ENCODE measurements at regions of chr20 and their contacts with region 1.

Region 1: DNA sequence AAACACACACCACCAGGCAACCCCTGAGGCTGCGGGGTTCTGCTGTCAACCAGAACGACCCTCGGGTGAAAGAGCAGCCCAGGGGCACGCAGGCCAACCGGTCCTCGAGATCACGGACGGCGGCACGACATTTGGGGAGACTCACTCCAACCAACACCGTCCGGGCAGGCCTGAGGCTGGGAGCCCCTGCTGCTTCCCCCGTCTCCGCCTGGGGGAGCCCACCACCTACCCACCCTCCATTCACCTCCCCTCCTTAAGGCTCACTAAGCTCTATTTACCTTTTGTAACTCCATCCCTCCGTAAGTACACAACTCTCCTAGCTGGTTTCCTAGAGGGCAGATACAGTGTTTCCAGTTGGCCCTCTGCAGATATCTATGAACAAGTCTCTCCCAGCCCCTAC is 971.3 kb upstream of the DEFB115 start:
- DNase-seq: no peak
- ATAC-seq: no peak
- H3K4me3 ChIP-seq: no peak overlapping the region
- H3K4me3 Mint-ChIP-seq: peak overlapping the region in 2 of 10 donors; percentile 17 to 58
- H3K27ac ChIP-seq: no peak overlapping the region
- H3K27ac Mint-ChIP-seq: peak overlapping the region in 4 of 9 donors; percentile 4 to 82 (median 35)
- H3K4me1 ChIP-seq: peaks cover 4 to 5% of the 10 kb centered on the region in 2 donors
- H3K4me1 Mint-ChIP-seq: peaks cover 0 to 58% (median 24%) of the 10 kb centered on the region in 7 donors
- H3K27me3 ChIP-seq: no peaks in the 10 kb centered on the region
- H3K27me3 Mint-ChIP-seq: no peaks in the 10 kb centered on the region

Region 2: GRCh38 chr20:29306390-29307072 is 979.6 kb before region 1 on chr20:
- CTCF ChIA-PET with region 1: no interaction called
- POLR2A ChIA-PET with region 1: no interaction called
- intact Hi-C with region 1: loop called in 1 of 2 experiments (anchors 10 kb)
- DNase-seq: peak in 1 of 9 donors; percentile 48
- ATAC-seq: no peak
- H3K4me3 ChIP-seq: no peak overlapping the region
- H3K4me3 Mint-ChIP-seq: peak overlapping the region in 4 of 10 donors; percentile 46 to 82 (median 60)
- H3K27ac ChIP-seq: no peak overlapping the region
- H3K27ac Mint-ChIP-seq: peak overlapping the region in 3 of 9 donors; percentile 20 to 94 (median 78)
- H3K4me1 ChIP-seq: no peaks in the 10 kb centered on the region
- H3K4me1 Mint-ChIP-seq: peaks cover 0 to 36% (median 20%) of the 10 kb centered on the region in 7 donors
- H3K27me3 ChIP-seq: no peaks in the 10 kb centered on the region
- H3K27me3 Mint-ChIP-seq: peaks cover 0 to 38% (median 4%) of the 10 kb centered on the region in 5 donors

Region 3: DNA sequence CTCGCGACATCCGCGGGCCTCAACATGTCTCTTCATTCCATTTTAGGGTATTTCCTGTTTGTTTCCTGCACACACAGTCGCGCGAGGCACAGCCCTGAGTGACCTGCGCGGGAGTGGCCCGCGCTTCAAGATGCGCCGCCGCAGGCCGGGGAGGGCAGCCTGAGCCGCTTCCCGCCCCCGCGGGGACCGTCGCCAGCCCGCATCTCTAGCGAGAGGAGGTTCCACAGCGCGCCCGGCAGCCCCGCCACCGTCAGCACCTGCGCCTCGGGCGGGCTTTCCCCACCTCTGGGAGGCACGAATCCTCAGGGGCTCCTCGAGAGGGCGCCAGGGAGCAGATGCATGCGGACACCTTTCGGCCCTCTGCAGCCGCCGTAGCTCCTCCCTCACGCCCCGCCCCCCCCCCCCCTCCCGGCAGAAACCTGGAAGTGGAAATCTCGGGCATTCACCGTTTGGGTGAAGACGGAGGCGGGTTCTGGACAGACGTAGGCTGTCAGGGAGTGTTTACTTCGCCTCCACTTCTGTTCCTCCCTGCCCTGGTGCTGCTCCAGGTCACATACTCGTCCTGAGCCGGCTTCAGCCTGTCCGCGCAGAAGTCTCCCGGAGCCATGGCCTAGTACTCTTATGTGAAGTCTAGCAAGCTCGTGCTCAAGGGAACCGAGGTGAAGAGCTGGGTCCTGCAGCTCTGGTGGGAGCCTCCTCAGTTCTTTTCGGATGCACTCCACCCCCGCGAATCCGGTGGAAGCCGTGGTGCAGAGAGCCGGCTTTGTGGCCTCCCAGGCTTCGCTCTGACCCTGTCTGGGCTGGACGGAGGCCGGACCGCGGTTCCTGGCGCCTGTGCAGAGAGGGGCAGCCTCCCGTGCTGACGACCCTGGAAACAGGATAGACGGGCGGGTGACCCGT is 90.9 kb after region 1 on chr20:
- CTCF ChIA-PET with region 1: no interaction called
- POLR2A ChIA-PET with region 1: no interaction called
- intact Hi-C with region 1: loop called (anchors 1 to 2 kb)
- DNase-seq: peak; percentile 45 to 93 (median 89)
- ATAC-seq: peak; percentile 98
- H3K4me3 ChIP-seq: peak overlapping the region; percentile 89
- H3K4me3 Mint-ChIP-seq: peak overlapping the region in 9 of 10 donors; percentile 62 to 97 (median 91)
- H3K27ac ChIP-seq: peak overlapping the region; percentile 87
- H3K27ac Mint-ChIP-seq: peak overlapping the region; percentile 68 to 97 (median 94)
- H3K4me1 ChIP-seq: peaks cover 0 to 2% of the 10 kb centered on the region in 2 donors
- H3K4me1 Mint-ChIP-seq: peaks cover 0 to 40% (median 21%) of the 10 kb centered on the region in 7 donors
- H3K27me3 ChIP-seq: no peaks in the 10 kb centered on the region
- H3K27me3 Mint-ChIP-seq: no peaks in the 10 kb centered on the region

Region 4: DNA sequence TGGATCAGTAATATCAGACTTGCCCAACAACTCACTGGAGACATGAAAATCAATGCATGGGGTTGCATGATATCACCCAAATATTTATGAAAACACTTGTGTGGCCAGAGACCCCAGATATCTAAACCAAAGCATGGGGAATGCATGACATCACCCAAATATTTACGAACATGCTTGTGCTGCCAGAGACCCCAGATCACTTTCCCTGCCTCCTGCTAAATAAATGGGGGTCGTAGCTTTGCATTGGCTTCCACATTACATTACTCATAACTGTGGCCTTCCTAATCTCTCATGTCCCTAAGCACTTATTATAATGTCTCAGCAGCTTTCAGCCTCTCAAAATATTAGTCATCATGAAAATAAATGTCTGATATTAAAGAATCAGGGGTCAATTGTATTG is 133.3 kb after region 1 on chr20:
- CTCF ChIA-PET with region 1: no interaction called
- POLR2A ChIA-PET with region 1: no interaction called
- intact Hi-C with region 1: no loop called
- DNase-seq: no peak
- ATAC-seq: no peak
- H3K4me3 ChIP-seq: no peak overlapping the region
- H3K4me3 Mint-ChIP-seq: no peak overlapping the region
- H3K27ac ChIP-seq: no peak overlapping the region
- H3K27ac Mint-ChIP-seq: no peak overlapping the region
- H3K4me1 ChIP-seq: no peaks in the 10 kb centered on the region
- H3K4me1 Mint-ChIP-seq: no peaks in the 10 kb centered on the region
- H3K27me3 ChIP-seq: no peaks in the 10 kb centered on the region
- H3K27me3 Mint-ChIP-seq: no peaks in the 10 kb centered on the region

Region 5: GRCh38 chr20:30513050-30513628 is 227.0 kb after region 1 on chr20:
- CTCF ChIA-PET with region 1: no interaction called
- POLR2A ChIA-PET with region 1: no interaction called
- intact Hi-C with region 1: no loop called
- DNase-seq: no peak
- ATAC-seq: no peak
- H3K4me3 ChIP-seq: no peak overlapping the region
- H3K4me3 Mint-ChIP-seq: no peak overlapping the region
- H3K27ac ChIP-seq: no peak overlapping the region
- H3K27ac Mint-ChIP-seq: no peak overlapping the region
- H3K4me1 ChIP-seq: no peaks in the 10 kb centered on the region
- H3K4me1 Mint-ChIP-seq: peaks cover 0 to 2% (median 0%) of the 10 kb centered on the region in 7 donors
- H3K27me3 ChIP-seq: no peaks in the 10 kb centered on the region
- H3K27me3 Mint-ChIP-seq: peaks cover 0 to 7% (median 0%) of the 10 kb centered on the region in 5 donors

Measured in naive thymus-derived CD4-positive, alpha-beta T cell (primary cell).